ENCODE measurements at regions of chr3 and their contacts with region 1.

Region 1: DNA sequence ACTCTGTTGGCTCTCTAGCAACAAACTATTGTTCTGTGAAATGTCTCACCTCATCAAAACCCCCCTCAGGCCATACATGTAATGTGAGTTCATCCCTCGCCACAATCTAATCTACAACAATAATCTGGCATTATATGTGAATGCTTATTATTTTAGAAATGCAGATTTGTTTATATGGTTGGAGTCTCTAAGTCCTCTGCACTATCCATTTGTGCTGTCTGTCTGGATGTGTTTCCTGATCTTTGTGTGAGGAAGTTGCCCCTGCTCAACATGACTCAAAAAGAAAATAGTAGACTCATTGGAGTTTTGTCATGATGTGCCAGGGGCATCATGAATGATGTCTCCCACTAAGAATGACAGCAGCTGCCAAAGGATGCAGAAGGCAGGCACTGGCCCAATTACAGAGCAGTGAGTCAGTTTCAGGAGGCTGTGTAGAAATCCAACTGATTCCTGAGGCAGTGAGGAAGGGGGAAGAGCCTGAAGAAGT is 161.6 kb upstream of the PDZRN3 start:
- DNase-seq: no peak
- H3K4me3 ChIP-seq: no peak overlapping the region
- H3K27ac ChIP-seq: no peak overlapping the region
- H3K4me1 ChIP-seq: peaks cover 0 to 3% (median 0%) of the 10 kb centered on the region in 4 donors
- H3K27me3 ChIP-seq: no peaks in the 10 kb centered on the region
- CTCF ChIP-seq: no peak
- EP300 ChIP-seq: no peak
- POLR2A ChIP-seq: no peak

Region 2: GRCh38 chr3:73637042-73637441 is 149.3 kb before region 1 on chr3:
- intact Hi-C with region 1: loop called (anchors 10 kb)
- DNase-seq: no peak
- H3K4me3 ChIP-seq: no peak overlapping the region
- H3K27ac ChIP-seq: no peak overlapping the region
- H3K4me1 ChIP-seq: peaks cover 0 to 5% (median 2%) of the 10 kb centered on the region in 4 donors
- H3K27me3 ChIP-seq: no peaks in the 10 kb centered on the region
- CTCF ChIP-seq: no peak
- EP300 ChIP-seq: no peak
- POLR2A ChIP-seq: no peak

Measured in esophagus muscularis mucosa (tissue), 4 donors.